PC-9 (cell line): ENCODE measurements at regions of chr12 and their contacts with region 1.

Region 1: GRCh38 chr12:52870351-52871290 is 21.8 kb upstream of the KRT78 start:
- DNase-seq: peak; percentile 44 to 75
- H3K4me3 ChIP-seq: peak overlapping the region; percentile 23; the same call in 1 of the 2 replicates
- H3K27ac ChIP-seq: peak overlapping the region; percentile 100
- H3K4me1 ChIP-seq: peaks cover 51% of the 10 kb centered on the region
- H3K27me3 ChIP-seq: no peaks in the 10 kb centered on the region
- CTCF ChIP-seq: peak; percentile 94

Region 2: GRCh38 chr12:52139552-52140062 is 731.0 kb before region 1 on chr12:
- CTCF ChIA-PET with region 1: no interaction called
- POLR2A ChIA-PET with region 1: interaction called, 5 read pairs
- intact Hi-C with region 1: loop called (anchors 1 kb)
- DNase-seq: peak; percentile 62 to 78
- H3K4me3 ChIP-seq: no peak overlapping the region
- H3K27ac ChIP-seq: no peak overlapping the region
- H3K4me1 ChIP-seq: peaks cover 22% of the 10 kb centered on the region
- H3K27me3 ChIP-seq: no peaks in the 10 kb centered on the region
- CTCF ChIP-seq: peak; percentile 94

Region 3: DNA sequence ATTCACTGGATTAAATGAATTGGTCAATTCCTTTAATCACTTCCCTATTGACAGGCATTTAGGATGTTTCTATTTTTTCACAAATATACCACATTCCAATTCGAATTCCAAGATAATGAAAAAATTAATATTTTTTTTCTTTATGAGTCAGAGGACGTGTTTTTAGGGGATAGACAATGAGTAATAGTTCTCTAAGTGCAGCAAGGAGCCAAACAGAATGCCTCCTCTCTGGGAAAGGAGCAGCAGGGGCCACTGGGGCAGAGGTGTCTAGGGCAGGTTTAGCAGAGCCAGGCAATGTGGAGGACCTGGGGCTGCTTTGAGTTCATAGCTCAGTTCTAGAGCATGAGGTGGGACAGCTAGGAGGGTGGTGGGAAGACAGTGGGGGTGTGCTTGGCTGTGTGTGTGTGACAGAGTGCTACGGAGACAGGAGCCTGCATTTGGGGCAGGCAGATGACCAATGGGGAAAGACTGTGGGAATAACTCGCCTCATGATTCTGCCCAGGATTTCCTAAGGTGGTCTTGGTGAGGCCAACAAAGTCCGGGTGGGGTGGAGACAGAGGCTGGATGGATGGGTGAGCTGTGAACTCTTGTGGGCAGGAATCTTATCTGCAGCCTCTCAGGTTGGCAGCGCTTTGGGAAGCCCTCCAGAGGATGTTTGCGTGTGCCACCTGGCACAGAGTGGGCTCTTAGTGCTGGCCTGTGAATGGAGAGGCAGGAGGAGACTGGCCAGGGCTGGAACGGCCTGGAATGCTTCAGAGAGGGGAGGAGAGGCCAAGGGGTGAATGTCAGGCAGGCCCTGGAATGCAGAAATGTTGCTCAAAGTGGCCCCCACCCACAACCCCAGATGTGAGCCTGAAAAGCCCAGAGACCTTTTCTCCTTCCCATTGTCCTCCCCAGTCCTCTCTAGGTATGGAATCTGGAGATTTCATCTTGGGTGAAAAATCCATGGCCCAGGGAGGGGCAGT is 640.0 kb before region 1 on chr12:
- CTCF ChIA-PET with region 1: no interaction called
- POLR2A ChIA-PET with region 1: no interaction called
- intact Hi-C with region 1: loop called (anchors 5 kb)
- DNase-seq: peak; percentile 85 to 97
- H3K4me3 ChIP-seq: peak overlapping the region; percentile 96
- H3K27ac ChIP-seq: peak overlapping the region; percentile 97
- H3K4me1 ChIP-seq: peaks cover 65% of the 10 kb centered on the region
- H3K27me3 ChIP-seq: no peaks in the 10 kb centered on the region
- CTCF ChIP-seq: no peak

Region 4: DNA sequence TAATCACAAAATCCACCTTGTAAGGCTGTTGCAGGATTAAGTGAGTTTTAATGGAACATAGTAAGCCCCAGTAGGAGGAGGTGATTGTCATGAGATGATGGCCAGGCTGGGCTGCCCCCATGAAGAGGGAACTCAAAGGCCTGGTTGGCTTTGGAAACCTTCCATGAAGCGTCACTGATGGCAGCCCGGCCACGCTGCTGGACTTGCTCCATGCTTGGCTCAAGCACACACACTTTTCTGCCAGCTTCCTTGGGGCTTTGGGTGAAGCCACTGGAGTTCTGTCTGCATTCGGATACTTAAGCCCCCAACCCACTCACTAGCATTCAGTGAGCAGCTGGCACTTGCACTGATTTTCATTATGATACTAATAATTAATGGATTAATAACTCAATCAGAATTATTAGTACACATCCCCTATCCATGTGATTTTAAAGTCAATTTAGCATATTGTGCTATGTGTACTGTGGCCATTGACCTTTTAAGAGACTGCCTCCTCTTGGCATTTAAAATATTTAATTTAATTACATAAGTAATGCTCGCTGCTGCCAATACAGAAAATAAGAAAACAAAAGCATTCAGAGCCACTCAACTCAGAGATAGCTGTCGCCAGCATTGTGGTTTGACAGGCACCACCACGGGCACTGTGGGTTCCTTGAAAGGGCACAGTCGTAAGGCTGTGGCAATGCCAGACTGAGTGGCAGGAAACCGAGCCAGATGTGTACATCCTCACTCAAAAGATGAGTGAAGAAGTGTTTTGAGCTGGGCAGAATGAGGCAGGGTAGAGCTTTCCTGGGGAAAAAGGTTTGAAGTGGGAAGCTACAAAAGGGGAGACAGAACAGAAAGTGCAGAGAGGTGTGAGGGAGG is 519.2 kb before region 1 on chr12:
- CTCF ChIA-PET with region 1: no interaction called
- POLR2A ChIA-PET with region 1: no interaction called
- intact Hi-C with region 1: no loop called
- DNase-seq: no peak
- H3K4me3 ChIP-seq: no peak overlapping the region
- H3K27ac ChIP-seq: no peak overlapping the region
- H3K4me1 ChIP-seq: peaks cover 6% of the 10 kb centered on the region
- H3K27me3 ChIP-seq: no peaks in the 10 kb centered on the region
- CTCF ChIP-seq: no peak

Region 5: GRCh38 chr12:52372216-52373154 is 498.1 kb before region 1 on chr12:
- CTCF ChIA-PET with region 1: interaction called, 5 read pairs
- POLR2A ChIA-PET with region 1: interaction called, 6 read pairs
- intact Hi-C with region 1: loop called (anchors 2 kb)
- DNase-seq: peak; percentile 73 to 84
- H3K4me3 ChIP-seq: no peak overlapping the region
- H3K27ac ChIP-seq: no peak overlapping the region
- H3K4me1 ChIP-seq: peaks cover 9% of the 10 kb centered on the region
- H3K27me3 ChIP-seq: no peaks in the 10 kb centered on the region
- CTCF ChIP-seq: peak; percentile 90

Region 6: GRCh38 chr12:52442600-52443061 is 428.0 kb before region 1 on chr12:
- CTCF ChIA-PET with region 1: interaction called, 3 read pairs
- POLR2A ChIA-PET with region 1: interaction called, 9 read pairs
- intact Hi-C with region 1: loop called (anchors 1 kb)
- DNase-seq: peak; percentile 82 to 92
- H3K4me3 ChIP-seq: peak overlapping the region; percentile 17; the same call in 1 of the 2 replicates
- H3K27ac ChIP-seq: peak overlapping the region; percentile 97
- H3K4me1 ChIP-seq: peaks cover 74% of the 10 kb centered on the region
- H3K27me3 ChIP-seq: no peaks in the 10 kb centered on the region
- CTCF ChIP-seq: no peak; the same call in 1 of the 2 replicates

Region 7: DNA sequence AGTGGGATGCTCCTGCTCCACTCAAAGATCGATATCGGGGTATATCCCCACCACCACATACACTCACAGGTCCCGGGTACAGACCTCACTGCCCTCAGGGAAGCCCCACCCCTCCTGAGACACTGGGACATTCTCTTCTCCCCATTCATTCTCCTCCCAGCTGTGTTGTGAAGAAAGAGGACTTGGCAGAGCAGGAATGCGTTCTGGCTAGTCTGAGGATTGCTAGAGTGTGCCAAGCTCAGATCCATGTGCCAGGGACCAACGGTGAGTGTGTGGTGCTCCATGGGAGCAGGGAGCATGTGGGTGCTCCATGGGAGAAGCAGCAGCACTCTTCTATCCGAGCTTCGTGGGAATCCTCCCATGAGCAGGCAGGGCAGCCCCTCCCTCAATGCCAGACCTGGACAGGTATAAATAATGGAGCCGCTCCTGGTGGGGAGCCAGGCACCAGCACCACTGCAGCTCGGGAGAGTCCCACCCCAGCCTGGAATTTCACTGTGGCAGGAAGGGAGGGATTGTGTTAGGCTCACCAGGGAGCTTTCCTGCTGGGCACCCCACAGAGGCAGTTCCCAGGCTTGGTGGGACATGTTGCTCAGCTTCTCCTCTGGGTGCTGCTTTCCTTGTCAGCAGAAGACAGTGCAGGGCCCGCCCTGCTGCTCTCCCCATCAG is 348.1 kb before region 1 on chr12:
- CTCF ChIA-PET with region 1: interaction called, 4 read pairs
- POLR2A ChIA-PET with region 1: interaction called, 3 read pairs
- intact Hi-C with region 1: loop called (anchors 2 kb)
- DNase-seq: peak; percentile 78 to 87
- H3K4me3 ChIP-seq: peak overlapping the region; percentile 31; the same call in 1 of the 2 replicates
- H3K27ac ChIP-seq: peak overlapping the region; percentile 96
- H3K4me1 ChIP-seq: peaks cover 66% of the 10 kb centered on the region
- H3K27me3 ChIP-seq: no peaks in the 10 kb centered on the region
- CTCF ChIP-seq: no peak

Region 8: DNA sequence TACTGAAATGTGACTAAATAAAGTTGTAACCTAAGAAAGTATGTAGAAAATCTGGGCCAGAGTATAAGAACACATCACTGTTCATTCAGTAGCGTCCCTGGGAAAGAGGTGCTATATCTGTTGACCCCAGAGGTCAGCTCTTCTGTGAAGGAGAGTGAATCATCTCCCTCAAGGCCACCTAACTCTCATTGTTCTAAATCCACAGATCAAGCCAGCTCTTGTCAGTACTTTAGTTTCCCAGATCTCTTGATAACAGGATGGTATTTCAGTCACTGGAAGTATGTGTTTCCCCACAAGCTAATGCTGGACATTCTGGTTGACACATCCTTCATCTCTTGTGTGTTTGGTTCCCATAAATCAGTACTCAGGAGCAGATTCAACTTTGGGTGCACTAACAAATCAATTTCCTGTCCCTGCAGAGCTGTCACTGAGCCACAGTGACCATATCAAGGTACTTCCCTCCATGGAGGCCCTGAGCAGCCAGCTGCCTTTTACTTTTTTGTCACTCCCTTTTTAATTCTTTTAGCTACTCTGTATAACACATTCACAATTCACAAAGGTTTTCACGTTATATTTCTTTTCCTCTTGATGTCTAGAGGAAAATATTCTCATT is 198.2 kb before region 1 on chr12:
- CTCF ChIA-PET with region 1: no interaction called
- POLR2A ChIA-PET with region 1: interaction called, 7 read pairs
- intact Hi-C with region 1: loop called (anchors 2 kb)
- DNase-seq: peak; percentile 55 to 98
- H3K4me3 ChIP-seq: no peak overlapping the region
- H3K27ac ChIP-seq: peak overlapping the region; percentile 86
- H3K4me1 ChIP-seq: peaks cover 35% of the 10 kb centered on the region
- H3K27me3 ChIP-seq: no peaks in the 10 kb centered on the region
- CTCF ChIP-seq: no peak

Region 9: DNA sequence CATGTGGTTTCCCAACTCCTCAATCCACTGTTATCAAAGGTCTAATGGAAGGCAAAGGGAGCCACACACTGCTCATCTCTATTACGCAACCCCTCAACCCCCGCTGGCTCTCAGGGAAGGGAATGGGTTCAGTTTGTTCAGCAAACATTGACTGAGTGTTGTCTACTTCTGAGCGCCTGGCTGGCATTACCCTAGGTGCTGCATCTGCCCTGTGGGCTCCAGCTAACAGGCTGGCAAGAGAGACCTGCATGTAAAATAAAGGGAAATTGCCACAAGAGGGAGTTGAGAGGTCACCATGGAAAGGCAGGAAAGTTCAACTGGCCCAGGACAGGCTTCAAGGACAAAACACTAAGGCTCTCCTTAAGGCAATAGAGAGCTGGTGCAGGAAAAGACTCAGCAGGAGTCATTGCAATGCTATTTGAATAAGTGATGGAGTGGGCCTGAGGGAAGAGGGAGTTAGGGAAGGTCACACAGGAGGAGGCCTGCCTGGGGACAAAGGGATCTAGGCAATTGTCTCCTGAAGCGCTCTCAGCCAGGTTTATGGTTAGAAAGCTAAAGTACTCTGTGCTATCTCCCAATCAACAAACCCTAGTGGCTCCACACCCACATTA is 304.4 kb after region 1 on chr12:
- CTCF ChIA-PET with region 1: no interaction called
- POLR2A ChIA-PET with region 1: no interaction called
- intact Hi-C with region 1: no loop called
- DNase-seq: peak; percentile 21 to 63
- H3K4me3 ChIP-seq: no peak overlapping the region
- H3K27ac ChIP-seq: no peak overlapping the region
- H3K4me1 ChIP-seq: peaks cover 26% of the 10 kb centered on the region
- H3K27me3 ChIP-seq: no peaks in the 10 kb centered on the region
- CTCF ChIP-seq: peak; percentile 42; the same call in 1 of the 2 replicates